A673 (cell line): ENCODE measurements at regions of chr10 and their contacts with region 1.

Region 1: DNA sequence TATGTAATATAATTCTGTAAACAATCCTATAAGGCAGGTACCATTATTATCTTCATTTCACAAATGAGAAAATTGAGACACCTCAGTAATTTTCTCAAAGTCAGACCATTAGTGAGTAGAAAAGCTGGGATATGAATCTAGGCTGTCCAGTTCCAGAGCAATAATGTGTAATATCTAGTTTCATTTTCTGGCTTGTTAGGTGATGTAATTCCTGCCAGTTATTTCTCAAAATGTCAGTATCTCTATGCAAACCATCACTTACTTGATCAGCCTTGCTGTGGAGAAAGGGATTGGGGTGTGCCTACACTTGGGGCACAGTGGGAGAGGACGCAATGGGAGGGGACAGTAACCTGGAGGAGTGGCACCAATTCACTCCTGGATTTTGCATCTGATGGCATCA is 157.5 kb downstream of the LYZL1 start:
- DNase-seq: no peak
- H3K4me3 ChIP-seq: no peak overlapping the region
- H3K27ac ChIP-seq: peak overlapping the region; percentile 87
- H3K4me1 ChIP-seq: peaks cover 55% of the 10 kb centered on the region
- H3K27me3 ChIP-seq: no peaks in the 10 kb centered on the region
- CTCF ChIP-seq: no peak

Region 2: DNA sequence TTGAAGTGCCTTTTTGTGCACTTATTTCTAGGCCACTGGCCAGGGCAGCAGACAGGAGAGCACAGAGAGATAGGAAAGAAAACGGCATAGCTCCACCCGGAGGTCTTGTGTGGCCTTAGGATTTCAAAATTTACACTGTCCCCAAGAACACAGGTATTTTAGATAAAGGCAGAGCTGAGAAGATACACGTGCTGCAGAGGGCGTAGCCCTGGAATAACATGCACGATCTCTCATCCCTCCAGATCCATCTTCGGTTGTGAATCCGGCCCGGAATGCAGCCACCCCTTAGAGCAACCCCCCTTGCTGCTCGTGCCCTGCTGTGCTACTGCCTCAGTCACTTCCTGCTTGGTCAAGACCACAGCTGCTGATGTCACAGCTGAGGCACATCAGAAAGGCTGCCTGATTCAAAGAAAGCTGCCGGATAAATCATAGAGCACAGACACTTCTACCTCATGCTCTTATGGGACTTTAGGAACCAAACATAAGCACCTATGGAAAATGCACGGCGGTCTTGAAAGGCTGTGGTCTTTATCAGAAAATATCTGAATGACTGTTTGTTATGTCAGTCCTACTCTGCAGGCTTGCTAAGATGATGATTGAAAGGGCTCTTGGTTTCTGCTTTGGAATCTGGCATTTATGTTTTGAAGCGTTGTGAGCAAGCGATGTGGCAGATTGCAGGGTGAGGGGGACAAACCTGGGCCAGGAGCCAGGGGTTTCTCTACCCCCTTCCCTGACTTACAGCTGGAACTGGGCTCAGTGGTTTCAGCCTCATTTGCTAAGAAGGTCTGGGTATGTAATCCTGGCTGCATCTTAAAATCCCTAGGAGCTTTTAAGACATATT is 36.5 kb after region 1 on chr10:
- CTCF ChIA-PET with region 1: no interaction called
- POLR2A ChIA-PET with region 1: no interaction called
- intact Hi-C with region 1: loop called (anchors 5 kb)
- DNase-seq: peak; percentile 93
- H3K4me3 ChIP-seq: peak overlapping the region; percentile 25
- H3K27ac ChIP-seq: peak overlapping the region; percentile 98
- H3K4me1 ChIP-seq: peaks cover 71% of the 10 kb centered on the region
- H3K27me3 ChIP-seq: no peaks in the 10 kb centered on the region
- CTCF ChIP-seq: 0 out of 2 replicates have a peak, but pooled peaks have one; percentile 14

Region 3: DNA sequence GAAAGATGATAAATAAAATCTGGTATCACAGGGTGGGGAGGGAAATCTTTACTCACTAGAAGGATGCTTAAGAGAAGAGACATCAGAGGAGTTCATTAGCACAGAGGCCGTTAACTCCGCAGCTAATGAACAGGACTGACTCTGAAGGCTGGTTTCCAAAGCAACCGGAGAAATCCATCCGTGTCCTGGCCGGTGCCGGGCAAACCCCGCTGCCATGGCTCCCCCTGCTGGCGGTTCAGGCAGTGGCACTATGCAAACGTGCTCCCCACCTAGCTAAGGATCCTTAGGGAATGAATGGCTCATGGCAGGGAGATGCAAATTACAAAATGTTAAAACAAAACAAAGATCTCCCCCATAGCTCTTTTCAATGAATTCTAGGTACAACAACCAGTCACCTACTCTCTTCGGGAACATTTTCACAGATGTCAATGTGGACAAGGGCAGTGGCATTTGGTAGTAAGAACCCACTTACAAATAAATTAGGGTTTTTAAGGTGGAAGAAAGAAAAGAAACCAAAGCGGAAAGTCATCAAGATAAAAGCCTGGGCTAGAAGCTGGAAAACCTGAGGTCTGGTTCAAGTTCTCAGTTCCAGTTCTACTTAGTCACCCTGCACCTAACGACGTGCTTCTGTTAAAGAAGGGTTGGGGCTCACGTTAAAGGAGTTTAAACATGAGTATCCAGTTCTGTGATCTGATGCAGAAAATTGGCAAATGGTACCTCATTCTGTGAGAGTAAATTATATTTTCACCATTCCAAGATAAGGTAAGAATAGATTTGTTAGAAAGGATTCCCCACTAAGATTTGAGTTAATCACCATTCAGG is 50.2 kb after region 1 on chr10:
- CTCF ChIA-PET with region 1: no interaction called
- POLR2A ChIA-PET with region 1: no interaction called
- intact Hi-C with region 1: loop called (anchors 5 kb)
- DNase-seq: peak; percentile 86
- H3K4me3 ChIP-seq: no peak overlapping the region
- H3K27ac ChIP-seq: no peak overlapping the region
- H3K4me1 ChIP-seq: peaks cover 12% of the 10 kb centered on the region
- H3K27me3 ChIP-seq: no peaks in the 10 kb centered on the region
- CTCF ChIP-seq: peak; percentile 98

Region 4: GRCh38 chr10:29555746-29556481 is 109.6 kb after region 1 on chr10:
- CTCF ChIA-PET with region 1: no interaction called
- POLR2A ChIA-PET with region 1: no interaction called
- intact Hi-C with region 1: no loop called
- DNase-seq: no peak
- H3K4me3 ChIP-seq: no peak overlapping the region
- H3K27ac ChIP-seq: no peak overlapping the region
- H3K4me1 ChIP-seq: peaks cover 13% of the 10 kb centered on the region
- H3K27me3 ChIP-seq: no peaks in the 10 kb centered on the region
- CTCF ChIP-seq: no peak